Panc1 (cell line): ENCODE measurements at regions of chr6 and their contacts with region 1.

Region 1: DNA sequence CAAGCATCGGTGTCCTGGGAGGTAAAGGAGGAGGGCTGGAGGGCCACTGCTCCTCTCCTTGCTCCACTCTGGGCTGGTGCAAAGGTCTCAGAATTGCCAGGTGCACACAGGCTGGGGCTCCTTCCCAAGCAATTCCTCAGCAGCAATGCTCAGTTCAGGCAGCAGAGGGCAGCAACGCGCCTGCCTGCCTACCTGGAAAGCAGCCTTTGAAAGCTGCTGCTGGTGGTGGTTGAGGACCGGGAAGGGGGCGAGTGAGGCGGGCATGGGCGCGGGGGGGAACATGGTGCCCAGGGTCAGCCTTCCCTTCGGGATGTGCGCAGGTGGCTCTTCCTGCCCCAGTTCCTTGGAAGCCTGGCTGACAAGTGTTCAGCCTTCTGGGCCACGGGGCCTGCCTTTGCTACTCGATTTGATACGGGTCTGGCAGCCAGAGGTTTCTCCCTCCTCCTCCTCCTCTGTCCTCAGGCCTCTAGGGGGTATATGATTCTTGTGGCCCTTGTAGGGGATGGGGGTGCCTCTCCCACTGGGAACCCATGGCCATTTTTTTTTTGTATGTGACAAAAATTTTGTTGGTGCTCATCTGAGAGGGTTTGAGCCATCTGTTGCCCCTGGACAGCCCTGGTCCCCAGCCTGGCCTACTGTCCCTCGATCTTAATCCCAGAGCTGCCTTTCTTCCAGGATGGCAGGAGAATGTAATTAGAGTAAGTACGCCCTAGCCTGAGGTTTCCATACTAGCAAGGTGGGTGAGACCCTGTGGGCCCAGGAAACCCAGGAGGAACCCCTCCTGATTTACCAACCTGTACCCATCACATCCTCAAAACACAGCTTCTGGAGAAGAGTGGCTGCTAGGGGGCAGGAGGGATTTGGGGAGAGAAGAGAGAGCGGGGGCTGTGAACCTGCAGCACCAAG is 20.1 kb downstream of the MRPS18A start:
- DNase-seq: no peak
- ATAC-seq: peak; percentile 75
- H3K4me3 ChIP-seq: no peak overlapping the region
- H3K27ac ChIP-seq: no peak overlapping the region; the same call in 1 of the 2 replicates
- H3K4me1 ChIP-seq: peaks cover 9% of the 10 kb centered on the region
- H3K27me3 ChIP-seq: no peaks in the 10 kb centered on the region
- CTCF ChIP-seq: peak; percentile 98

Region 2: GRCh38 chr6:43769526-43770416 is 102.3 kb after region 1 on chr6 and contains the start of gene VEGFA:
- CTCF ChIA-PET with region 1: interaction called, 4 read pairs
- POLR2A ChIA-PET with region 1: no interaction called
- in situ Hi-C with region 1: no loop called
- intact Hi-C with region 1: loop called (anchors 5 kb)
- DNase-seq: peak; percentile 64
- ATAC-seq: peak; percentile 71
- H3K4me3 ChIP-seq: peak within 1 kb of the TSS; percentile 94 to 99
- H3K27ac ChIP-seq: peak within 1 kb of the TSS; percentile 87
- H3K4me1 ChIP-seq: peaks cover 23% of the 10 kb centered on the region
- H3K27me3 ChIP-seq: no peaks in the 10 kb centered on the region
- CTCF ChIP-seq: peak; percentile 99
- total RNA-seq, gene VEGFA: 98.7 TPM